Activated naive CD4-positive, alpha-beta T cell treated with anti-CD3 and anti-CD28 coated beads for 36 hours (primary cell): ENCODE measurements at regions of chr1 and their contacts with region 1.

Region 1: DNA sequence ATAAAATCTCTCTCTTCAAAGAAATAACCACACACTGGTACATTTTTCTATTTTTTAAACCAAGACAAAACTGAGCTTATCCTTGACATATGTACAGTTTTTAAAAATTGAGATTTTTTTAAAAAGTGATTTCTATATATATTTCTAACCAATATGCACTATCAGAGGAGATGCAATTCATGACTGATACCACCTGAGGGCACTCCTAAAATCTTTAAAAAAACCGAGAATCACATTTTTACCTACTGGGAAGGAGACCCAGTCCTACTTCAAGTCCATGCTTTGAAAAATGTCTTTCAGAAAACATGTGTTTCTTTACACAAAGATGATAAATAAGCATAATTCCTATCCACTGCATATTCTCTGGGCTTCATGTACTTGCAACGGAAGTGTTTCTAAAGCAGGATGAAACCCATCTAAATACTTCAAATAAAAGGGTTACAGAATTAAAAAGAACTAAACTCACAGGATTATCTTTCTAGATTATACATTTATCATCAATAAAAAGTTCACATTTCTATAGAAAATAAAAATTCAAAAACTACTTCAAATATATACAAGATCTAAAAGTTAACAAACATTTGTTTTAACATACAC is 98.6 kb downstream of the ENAH start:
- DNase-seq: no peak
- H3K4me3 Mint-ChIP-seq: no peak overlapping the region
- H3K27ac Mint-ChIP-seq: no peak overlapping the region
- H3K4me1 Mint-ChIP-seq: no peaks in the 10 kb centered on the region
- H3K27me3 Mint-ChIP-seq: peaks cover 2% of the 10 kb centered on the region

Region 2: DNA sequence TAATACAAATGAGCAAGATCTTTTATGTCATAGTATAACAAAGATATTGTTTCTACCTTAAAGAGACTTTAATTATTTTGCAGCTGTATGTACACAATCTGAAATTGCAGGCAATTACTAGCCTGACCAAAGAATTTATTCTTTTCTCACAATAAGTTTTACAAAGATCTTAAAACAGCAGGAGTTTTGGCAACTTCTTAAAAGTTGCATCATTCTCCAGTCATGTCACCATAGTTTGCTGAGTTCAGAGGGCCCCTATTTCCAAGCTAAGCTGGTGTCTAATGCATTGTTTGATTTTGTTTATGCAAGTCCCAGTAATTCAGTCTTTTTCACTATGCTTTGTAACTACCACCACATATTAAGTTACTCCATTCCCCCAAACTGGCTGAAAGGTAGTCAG is 510.1 kb before region 1 on chr1:
- CTCF ChIA-PET with region 1: no interaction called
- intact Hi-C with region 1: no loop called
- DNase-seq: no peak
- H3K4me3 Mint-ChIP-seq: no peak overlapping the region
- H3K27ac Mint-ChIP-seq: no peak overlapping the region
- H3K4me1 Mint-ChIP-seq: no peaks in the 10 kb centered on the region
- H3K27me3 Mint-ChIP-seq: peaks cover 4% of the 10 kb centered on the region

Region 3: GRCh38 chr1:225572422-225572821 is 18.1 kb after region 1 on chr1:
- CTCF ChIA-PET with region 1: no interaction called
- intact Hi-C with region 1: no loop called
- DNase-seq: no peak
- H3K4me3 Mint-ChIP-seq: no peak overlapping the region
- H3K27ac Mint-ChIP-seq: no peak overlapping the region
- H3K4me1 Mint-ChIP-seq: peaks cover 2% of the 10 kb centered on the region
- H3K27me3 Mint-ChIP-seq: no peaks in the 10 kb centered on the region

Region 4: DNA sequence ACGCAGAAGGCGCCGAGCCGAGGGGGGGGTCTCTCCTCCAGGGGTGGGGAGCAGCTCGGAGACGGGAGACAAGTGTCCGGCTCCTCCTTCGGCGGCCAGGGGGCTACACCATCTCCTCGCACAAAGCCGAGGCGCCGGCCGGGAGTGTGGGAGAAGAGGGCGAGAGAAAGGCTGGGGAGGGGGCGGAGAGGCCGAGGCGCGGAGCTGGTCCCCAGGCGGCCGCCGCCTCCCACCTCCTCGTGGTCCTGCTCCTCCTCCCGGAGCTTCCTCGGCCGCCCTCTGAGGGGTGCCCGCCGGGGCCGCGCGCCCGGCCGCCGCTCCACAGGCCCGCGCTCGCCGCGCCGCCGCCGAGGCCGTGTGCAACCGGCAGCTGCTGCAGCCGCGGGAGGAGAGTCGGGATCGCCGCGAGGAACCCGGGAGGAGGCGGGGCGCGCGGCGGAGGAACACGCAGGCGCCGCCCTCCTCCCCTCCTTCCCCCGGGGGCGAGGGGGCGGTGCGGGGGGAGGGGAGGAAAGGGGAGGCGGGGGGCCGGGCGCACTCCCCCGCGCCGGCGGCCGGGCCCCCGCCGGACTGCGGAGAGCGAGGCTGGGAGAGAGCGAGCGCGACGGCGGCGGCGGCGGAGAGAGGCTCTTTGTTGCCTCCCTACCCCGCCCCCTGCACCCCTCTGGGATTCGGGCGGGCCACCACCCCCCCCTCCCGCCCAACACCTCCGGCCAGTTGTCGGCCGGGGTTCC is 98.6 kb after region 1 on chr1 and contains the start of gene ENAH:
- CTCF ChIA-PET with region 1: interaction called, 3 read pairs
- intact Hi-C with region 1: loop called (anchors 5 kb)
- DNase-seq: peak; percentile 52
- H3K4me3 Mint-ChIP-seq: peak within 1 kb of the TSS; percentile 85
- H3K27ac Mint-ChIP-seq: peak within 1 kb of the TSS; percentile 50
- H3K4me1 Mint-ChIP-seq: peaks cover 10% of the 10 kb centered on the region
- H3K27me3 Mint-ChIP-seq: peaks cover 24% of the 10 kb centered on the region
- total RNA-seq, gene ENAH: 0.91 to 2.0 TPM

Region 5: GRCh38 chr1:225677350-225678124 is 123.2 kb after region 1 on chr1:
- CTCF ChIA-PET with region 1: no interaction called
- intact Hi-C with region 1: no loop called
- DNase-seq: no peak
- H3K4me3 Mint-ChIP-seq: no peak overlapping the region
- H3K27ac Mint-ChIP-seq: no peak overlapping the region
- H3K4me1 Mint-ChIP-seq: peaks cover 3% of the 10 kb centered on the region
- H3K27me3 Mint-ChIP-seq: peaks cover 20% of the 10 kb centered on the region

Region 6: DNA sequence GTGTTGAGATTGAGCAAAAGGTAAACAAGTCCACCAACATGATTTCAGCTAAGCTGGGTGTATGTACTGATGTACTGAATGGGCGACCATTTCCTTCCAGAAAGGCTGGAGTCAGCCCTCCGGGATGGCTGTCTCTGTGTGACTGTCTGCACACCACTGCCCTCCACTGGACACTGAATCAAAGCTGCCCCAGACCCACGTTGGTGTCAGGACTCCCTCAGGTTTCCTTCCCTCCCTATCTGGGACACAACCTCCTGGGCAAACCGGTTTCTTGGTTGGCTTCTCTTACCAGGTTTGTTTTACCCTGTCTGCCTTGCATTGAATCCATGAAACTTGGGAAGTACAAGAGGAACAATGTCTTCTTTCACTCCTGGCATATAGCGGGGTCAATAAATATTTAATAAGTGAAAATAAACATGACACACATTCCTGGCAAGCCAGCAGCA is 218.0 kb after region 1 on chr1:
- CTCF ChIA-PET with region 1: interaction called, 9 read pairs
- intact Hi-C with region 1: loop called (anchors 1 kb)
- DNase-seq: peak; percentile 67
- H3K4me3 Mint-ChIP-seq: no peak overlapping the region
- H3K27ac Mint-ChIP-seq: no peak overlapping the region
- H3K4me1 Mint-ChIP-seq: no peaks in the 10 kb centered on the region
- H3K27me3 Mint-ChIP-seq: no peaks in the 10 kb centered on the region

Region 7: GRCh38 chr1:225845571-225846259 is 291.4 kb after region 1 on chr1:
- CTCF ChIA-PET with region 1: no interaction called
- intact Hi-C with region 1: loop called (anchors 5 kb)
- DNase-seq: peak; percentile 49
- H3K4me3 Mint-ChIP-seq: no peak overlapping the region
- H3K27ac Mint-ChIP-seq: no peak overlapping the region
- H3K4me1 Mint-ChIP-seq: peaks cover 36% of the 10 kb centered on the region
- H3K27me3 Mint-ChIP-seq: no peaks in the 10 kb centered on the region